Naive thymus-derived CD4-positive, alpha-beta T cell (primary cell): ENCODE measurements at regions of chr15 and their contacts with region 1.

Region 1: DNA sequence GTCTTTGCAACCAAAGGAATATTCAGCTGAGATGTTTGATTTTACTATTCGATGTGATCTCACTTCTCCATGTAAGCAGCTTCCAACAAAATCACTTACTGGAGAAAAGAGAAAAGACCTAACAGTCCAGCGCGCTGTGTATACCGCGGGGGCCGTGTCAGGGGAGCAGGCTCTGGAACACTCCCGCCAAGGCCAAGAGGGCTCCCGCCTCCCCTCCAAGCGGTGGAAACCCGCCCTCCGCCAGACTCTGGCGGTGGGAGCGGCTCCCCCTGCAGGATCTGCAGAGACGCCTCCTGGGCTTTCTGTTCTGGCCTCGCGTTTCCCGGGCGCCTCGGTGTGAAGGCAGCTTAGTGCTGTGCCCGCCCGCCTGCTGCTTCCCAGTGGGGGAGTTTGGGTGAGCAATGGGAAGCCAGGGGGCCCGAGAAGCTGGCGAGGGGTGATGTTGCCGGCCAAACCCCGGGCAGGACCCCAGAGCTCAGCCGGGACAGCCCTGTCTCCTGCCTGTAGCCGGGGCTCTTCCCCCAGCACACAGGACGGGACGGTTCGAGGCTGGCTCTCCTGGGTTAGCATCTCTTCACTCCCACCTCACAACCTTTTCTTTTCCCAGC is 36.3 kb downstream of the CHST14 start:
- DNase-seq: peak; percentile 30 to 69 (median 52)
- ATAC-seq: peak; percentile 83
- H3K4me3 ChIP-seq: no peak overlapping the region
- H3K4me3 Mint-ChIP-seq: peak overlapping the region in 9 of 10 donors; percentile 5 to 61 (median 48)
- H3K27ac ChIP-seq: no peak overlapping the region
- H3K27ac Mint-ChIP-seq: no peak overlapping the region
- H3K4me1 ChIP-seq: peaks cover 0 to 11% of the 10 kb centered on the region in 2 donors
- H3K4me1 Mint-ChIP-seq: peaks cover 16 to 26% (median 23%) of the 10 kb centered on the region in 7 donors
- H3K27me3 ChIP-seq: peaks cover 9 to 15% of the 10 kb centered on the region in 2 donors
- H3K27me3 Mint-ChIP-seq: peaks cover 55 to 86% (median 60%) of the 10 kb centered on the region in 5 donors

Region 2: DNA sequence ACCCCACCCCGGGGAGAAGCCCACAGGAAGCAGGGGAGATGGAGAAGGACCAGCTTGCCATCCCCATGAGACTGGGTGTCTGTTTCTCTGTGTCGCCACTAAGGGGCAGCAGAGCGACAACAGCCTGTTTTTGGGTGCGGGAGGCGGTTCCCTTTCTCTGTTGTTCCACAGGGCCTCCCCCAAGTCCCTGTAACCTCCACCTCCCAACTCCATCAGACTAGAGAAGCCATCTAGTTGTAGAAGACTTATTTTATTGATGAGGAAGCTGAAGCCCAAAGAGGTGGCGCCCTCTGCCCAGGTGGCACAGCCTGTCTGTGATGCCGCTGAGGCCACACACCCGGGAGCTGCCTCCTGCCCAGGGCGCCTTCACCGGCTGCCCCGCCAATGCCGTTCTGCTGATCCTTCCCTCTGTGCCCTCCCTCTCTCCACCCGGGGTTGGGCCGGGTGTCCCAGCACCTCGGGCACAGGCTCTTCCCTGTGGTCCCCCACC is 162.4 kb before region 1 on chr15:
- CTCF ChIA-PET with region 1: interaction called, 3 read pairs
- POLR2A ChIA-PET with region 1: no interaction called
- intact Hi-C with region 1: loop called in 1 of 2 experiments (anchors 1 kb)
- DNase-seq: peak; percentile 49 to 75 (median 65)
- ATAC-seq: peak; percentile 85
- H3K4me3 ChIP-seq: no peak overlapping the region
- H3K4me3 Mint-ChIP-seq: no peak overlapping the region
- H3K27ac ChIP-seq: no peak overlapping the region
- H3K27ac Mint-ChIP-seq: no peak overlapping the region
- H3K4me1 ChIP-seq: no peaks in the 10 kb centered on the region
- H3K4me1 Mint-ChIP-seq: peaks cover 0 to 8% (median 0%) of the 10 kb centered on the region in 7 donors
- H3K27me3 ChIP-seq: no peaks in the 10 kb centered on the region
- H3K27me3 Mint-ChIP-seq: no peaks in the 10 kb centered on the region

Region 3: DNA sequence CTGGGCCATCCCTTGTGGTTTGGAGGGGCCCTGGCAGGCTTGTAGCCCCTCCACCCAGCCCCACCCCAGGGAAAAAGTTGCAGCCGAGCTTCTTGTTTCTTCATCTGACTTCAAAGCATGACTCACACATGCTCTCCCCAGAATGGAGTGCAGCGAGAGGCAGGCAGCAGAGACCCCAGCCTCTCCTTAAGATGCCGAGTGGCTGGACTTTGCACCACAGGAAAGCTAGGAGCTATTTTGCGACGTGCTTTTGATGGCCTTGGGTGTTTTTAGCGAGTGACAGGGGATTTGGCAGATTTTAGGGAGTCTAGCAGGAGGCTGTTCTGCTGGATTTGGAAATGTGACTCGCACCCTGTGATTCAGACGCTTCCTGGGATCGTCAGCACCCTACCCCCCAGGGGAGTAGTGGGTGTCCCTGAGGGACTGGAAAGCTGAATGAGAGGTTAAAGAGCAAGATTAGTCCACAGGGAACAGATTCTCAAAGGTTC is 52.1 kb before region 1 on chr15:
- CTCF ChIA-PET with region 1: interaction called, 4 read pairs
- POLR2A ChIA-PET with region 1: no interaction called
- intact Hi-C with region 1: loop called in 1 of 2 experiments (anchors 5 kb)
- DNase-seq: no peak
- ATAC-seq: no peak
- H3K4me3 ChIP-seq: peak overlapping the region; percentile 16
- H3K4me3 Mint-ChIP-seq: peak overlapping the region; percentile 72 to 95 (median 86)
- H3K27ac ChIP-seq: peak overlapping the region; percentile 63
- H3K27ac Mint-ChIP-seq: peak overlapping the region; percentile 48 to 97 (median 93)
- H3K4me1 ChIP-seq: peaks cover 39 to 70% of the 10 kb centered on the region in 2 donors
- H3K4me1 Mint-ChIP-seq: peaks cover 64 to 81% (median 76%) of the 10 kb centered on the region in 7 donors
- H3K27me3 ChIP-seq: no peaks in the 10 kb centered on the region
- H3K27me3 Mint-ChIP-seq: no peaks in the 10 kb centered on the region

Region 4: DNA sequence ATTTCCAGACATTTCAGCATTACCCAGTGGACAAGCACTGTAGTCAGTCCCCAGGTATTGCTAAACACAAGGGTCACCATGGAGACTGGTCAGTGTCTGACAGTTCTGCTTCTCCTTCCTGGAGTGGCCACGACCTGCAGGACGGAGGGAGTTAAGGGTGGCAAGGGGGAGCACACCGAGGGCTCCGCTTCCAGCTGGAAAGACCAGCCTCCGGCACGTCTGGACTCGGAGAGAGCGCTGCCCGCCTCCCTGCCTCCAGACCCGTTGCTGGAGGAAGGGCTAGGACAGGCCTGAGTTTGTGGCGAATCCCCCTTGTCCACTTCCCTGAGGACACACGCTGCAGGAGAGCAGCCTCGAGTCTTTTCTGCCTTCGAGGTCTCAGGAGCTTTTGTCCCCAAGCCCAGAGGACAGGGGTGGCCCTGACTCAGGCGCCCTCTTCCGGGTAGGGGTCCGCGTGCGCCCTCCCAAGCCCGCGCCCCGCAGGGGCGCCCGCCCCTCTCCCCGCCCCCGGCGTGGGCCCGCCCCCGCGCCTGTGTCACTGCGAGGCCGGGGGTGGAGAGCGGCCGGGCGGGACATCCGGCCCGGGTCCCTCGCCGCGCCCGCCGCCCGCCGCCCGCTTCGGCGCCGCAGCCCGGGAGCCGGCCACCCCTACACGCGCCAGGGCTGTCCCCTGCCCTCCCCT is 36.5 kb before region 1 on chr15 and contains the start of gene CHST14:
- CTCF ChIA-PET with region 1: no interaction called
- POLR2A ChIA-PET with region 1: no interaction called
- intact Hi-C with region 1: loop called in 1 of 2 experiments (anchors 1 kb)
- DNase-seq: peak; percentile 24 to 68 (median 53)
- ATAC-seq: peak; percentile 88
- H3K4me3 ChIP-seq: peak within 1 kb of the TSS; percentile 89
- H3K4me3 Mint-ChIP-seq: peak within 1 kb of the TSS; percentile 90 to 96 (median 92)
- H3K27ac ChIP-seq: peak within 1 kb of the TSS; percentile 81
- H3K27ac Mint-ChIP-seq: peak within 1 kb of the TSS; percentile 80 to 95 (median 87)
- H3K4me1 ChIP-seq: peaks cover 8 to 16% of the 10 kb centered on the region in 2 donors
- H3K4me1 Mint-ChIP-seq: peaks cover 15 to 47% (median 37%) of the 10 kb centered on the region in 7 donors
- H3K27me3 ChIP-seq: no peaks in the 10 kb centered on the region
- H3K27me3 Mint-ChIP-seq: peaks cover 0 to 3% (median 0%) of the 10 kb centered on the region in 5 donors
- total RNA-seq, gene CHST14: 7.3 to 12.5 (median 10.8) TPM